ENCODE measurements at regions of chr12 and their contacts with region 1.

Region 1: DNA sequence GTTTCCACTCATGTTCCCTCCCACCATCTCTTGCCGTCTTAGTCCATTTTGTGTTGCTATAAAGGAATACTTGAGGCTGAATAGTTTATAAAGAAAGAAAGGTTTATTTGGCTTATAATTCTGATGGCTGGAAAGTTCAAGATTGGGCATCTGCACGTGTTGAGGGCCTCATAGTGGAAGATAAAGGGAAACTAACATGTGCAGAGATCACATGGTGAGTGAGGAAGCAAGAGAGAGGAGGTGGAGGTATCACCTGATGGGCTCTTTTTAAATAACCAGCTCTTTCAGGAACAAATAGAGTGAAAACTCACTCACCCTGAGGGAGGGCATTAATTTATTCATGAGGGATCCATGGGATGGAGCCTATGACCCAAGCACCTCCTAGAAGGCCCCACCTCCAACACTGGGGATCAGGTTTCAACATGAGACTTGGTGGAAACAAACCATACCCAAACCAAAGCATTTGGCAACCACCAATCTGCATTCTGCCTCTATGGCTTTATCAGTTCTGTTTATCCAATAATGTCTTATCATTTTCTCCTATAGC is 29.5 kb downstream of the MYO1H start:
- DNase-seq: peak; percentile 28
- H3K4me3 Mint-ChIP-seq: no peak overlapping the region
- H3K27ac Mint-ChIP-seq: no peak overlapping the region
- H3K4me1 Mint-ChIP-seq: no peaks in the 10 kb centered on the region
- H3K27me3 Mint-ChIP-seq: peaks cover 75% of the 10 kb centered on the region
- CTCF ChIP-seq: no peak

Region 2: DNA sequence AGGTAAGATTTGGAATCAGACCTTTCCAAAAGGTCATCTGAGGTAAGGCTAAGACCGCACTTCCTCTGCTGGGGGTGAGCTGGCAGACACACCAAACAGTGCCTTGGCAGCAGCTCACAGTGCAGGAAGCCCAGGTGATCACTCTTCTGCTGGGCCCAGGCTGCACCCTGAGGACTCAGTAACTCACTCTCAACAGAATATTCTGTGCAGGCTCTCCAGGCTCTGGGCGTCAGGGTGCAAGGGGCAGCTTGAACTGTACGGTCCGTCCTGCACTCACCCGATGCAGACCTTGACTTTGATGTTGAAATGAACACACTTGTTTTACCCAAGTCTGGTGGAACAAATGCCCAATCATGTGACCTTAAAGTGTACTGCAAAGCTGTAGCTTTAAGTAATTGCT is 290.0 kb before region 1 on chr12:
- CTCF ChIA-PET with region 1: no interaction called
- POLR2A ChIA-PET with region 1: no interaction called
- intact Hi-C with region 1: no loop called
- DNase-seq: no peak
- H3K4me3 Mint-ChIP-seq: no peak overlapping the region
- H3K27ac Mint-ChIP-seq: no peak overlapping the region
- H3K4me1 Mint-ChIP-seq: peaks cover 13% of the 10 kb centered on the region
- H3K27me3 Mint-ChIP-seq: no peaks in the 10 kb centered on the region
- CTCF ChIP-seq: no peak

Region 3: GRCh38 chr12:109393437-109394345 is 16.5 kb after region 1 on chr12:
- CTCF ChIA-PET with region 1: interaction called, 11 read pairs
- POLR2A ChIA-PET with region 1: interaction called, 3 read pairs
- intact Hi-C with region 1: no loop called
- DNase-seq: peak; percentile 68
- H3K4me3 Mint-ChIP-seq: no peak overlapping the region
- H3K27ac Mint-ChIP-seq: no peak overlapping the region
- H3K4me1 Mint-ChIP-seq: no peaks in the 10 kb centered on the region
- H3K27me3 Mint-ChIP-seq: peaks cover 51% of the 10 kb centered on the region
- CTCF ChIP-seq: peak; percentile 90

Measured in MCF 10A (cell line).